Psoas muscle (tissue), 8 donors: ENCODE measurements at regions of chr1 and their contacts with region 1.

Region 1: DNA sequence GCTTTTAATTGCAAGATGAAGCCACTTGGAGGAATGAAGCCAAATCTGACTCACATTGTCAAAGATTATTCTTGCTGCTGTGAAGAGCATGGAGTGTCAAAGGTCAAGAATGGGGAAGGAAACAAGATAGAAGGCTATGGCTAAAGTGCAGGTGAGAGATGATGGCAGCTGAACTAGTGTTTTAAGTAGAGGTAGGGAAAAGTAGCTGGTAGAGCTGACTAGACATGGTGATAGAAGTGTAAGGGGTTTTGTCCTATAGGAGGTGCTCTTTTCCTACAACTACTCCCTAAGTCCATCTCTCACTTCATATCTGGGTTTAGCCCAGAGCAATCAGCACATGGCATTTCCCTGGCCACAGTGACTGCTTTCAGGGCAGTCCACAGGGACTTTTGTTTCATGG is 11.8 kb downstream of the UBE2T start:
- DNase-seq: no peak
- ATAC-seq: no peak
- H3K4me3 ChIP-seq: no peak overlapping the region
- H3K27ac ChIP-seq: no peak overlapping the region
- H3K4me1 ChIP-seq: peaks cover 11% of the 10 kb centered on the region
- H3K27me3 ChIP-seq: no peaks in the 10 kb centered on the region
- CTCF ChIP-seq: no peak

Region 2: GRCh38 chr1:202376247-202376646 is 46.4 kb after region 1 on chr1:
- intact Hi-C with region 1: no loop called
- DNase-seq: no peak
- ATAC-seq: peak in 3 of 4 donors; percentile 39 to 70 (median 70)
- H3K4me3 ChIP-seq: no peak overlapping the region
- H3K27ac ChIP-seq: peak overlapping the region; percentile 32
- H3K4me1 ChIP-seq: peaks cover 36% of the 10 kb centered on the region
- H3K27me3 ChIP-seq: no peaks in the 10 kb centered on the region
- CTCF ChIP-seq: no peak

Region 3: GRCh38 chr1:202397256-202397655 is 67.4 kb after region 1 on chr1:
- intact Hi-C with region 1: no loop called
- DNase-seq: no peak
- ATAC-seq: no peak
- H3K4me3 ChIP-seq: no peak overlapping the region
- H3K27ac ChIP-seq: peak overlapping the region; percentile 71
- H3K4me1 ChIP-seq: peaks cover 33% of the 10 kb centered on the region
- H3K27me3 ChIP-seq: no peaks in the 10 kb centered on the region
- CTCF ChIP-seq: no peak

Region 4: GRCh38 chr1:202625416-202626360 is 295.8 kb after region 1 on chr1:
- intact Hi-C with region 1: loop called in 1 of 2 experiments (anchors 10 kb)
- DNase-seq: peak; percentile 73 to 88
- ATAC-seq: peak; percentile 82 to 89 (median 84)
- H3K4me3 ChIP-seq: no peak overlapping the region
- H3K27ac ChIP-seq: no peak overlapping the region
- H3K4me1 ChIP-seq: peaks cover 13% of the 10 kb centered on the region
- H3K27me3 ChIP-seq: peaks cover 0 to 3% (median 0%) of the 10 kb centered on the region in 3 donors
- CTCF ChIP-seq: peak; percentile 59

Region 5: DNA sequence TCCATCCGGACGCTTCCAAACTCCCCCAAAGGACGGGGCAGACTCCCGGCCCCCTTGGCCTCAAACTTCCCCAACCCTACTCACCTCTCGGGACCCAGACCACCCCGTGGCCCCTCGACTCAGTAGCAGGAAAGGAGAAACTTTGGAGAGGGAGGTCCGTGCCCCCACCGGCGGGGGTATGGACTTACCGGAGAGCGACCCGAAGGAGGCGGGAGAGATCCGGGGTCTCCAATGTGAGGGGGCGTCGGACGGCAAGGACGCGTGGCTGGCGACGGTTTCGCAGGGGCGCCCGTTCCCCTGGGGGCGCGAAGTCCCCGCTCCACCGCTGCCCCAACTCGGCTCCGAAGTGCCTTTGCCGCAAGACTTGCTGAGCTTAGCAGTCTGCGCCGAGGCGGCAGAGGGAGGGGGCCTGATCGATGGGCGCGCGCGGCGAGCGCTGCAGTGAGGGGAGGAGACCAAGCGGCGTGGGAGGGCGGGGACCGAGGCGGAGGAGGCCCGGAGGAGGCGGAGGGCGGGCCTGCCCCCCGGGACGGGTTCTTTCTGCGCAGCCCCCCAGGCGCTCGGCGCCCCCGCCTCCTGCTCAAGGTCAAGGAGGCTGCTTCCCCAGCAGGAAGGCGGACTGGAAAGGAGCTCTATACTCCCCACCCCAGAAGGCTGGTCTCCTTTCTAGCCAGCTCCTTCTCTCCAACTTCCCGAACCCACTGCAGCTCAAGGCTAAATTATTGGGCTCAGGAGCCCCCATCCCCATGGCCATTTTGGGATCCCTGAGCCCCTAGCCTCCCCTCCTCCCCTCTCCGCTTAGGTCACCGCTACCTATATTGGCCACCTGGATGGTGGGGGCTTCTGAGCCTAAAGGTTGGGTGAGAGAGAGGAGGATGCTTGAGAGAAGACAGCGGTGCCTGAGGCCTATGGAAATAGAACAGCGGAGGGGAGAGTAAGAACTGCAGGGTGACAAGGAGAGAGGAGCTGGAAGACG is 380.5 kb after region 1 on chr1 and contains the start of gene SYT2:
- intact Hi-C with region 1: loop called in 1 of 2 experiments (anchors 10 kb)
- DNase-seq: peak; percentile 27 to 50
- ATAC-seq: peak in 3 of 4 donors; percentile 34 to 48 (median 46)
- H3K4me3 ChIP-seq: peak within 1 kb of the TSS; percentile 60
- H3K27ac ChIP-seq: no peak within 1 kb of the TSS
- H3K4me1 ChIP-seq: peaks cover 11% of the 10 kb centered on the region
- H3K27me3 ChIP-seq: peaks cover 0 to 57% (median 20%) of the 10 kb centered on the region in 3 donors
- CTCF ChIP-seq: no peak
- total RNA-seq, gene SYT2: 0.02 TPM in 1 of 4 donors, not detected in the others